CD8-positive, alpha-beta memory T cell (primary cell): ENCODE measurements at regions of chr4 and their contacts with region 1.

Region 1: GRCh38 chr4:101347557-101348366 is 436 bp upstream of the PPP3CA start:
- DNase-seq: peak; percentile 97 to 99 (median 99)
- H3K4me3 ChIP-seq: peak overlapping the region; percentile 98
- H3K4me3 Mint-ChIP-seq: peak overlapping the region; percentile 91 to 99 (median 96)
- H3K27ac ChIP-seq: peak overlapping the region; percentile 80
- H3K27ac Mint-ChIP-seq: peak overlapping the region; percentile 93 to 98 (median 95)
- H3K4me1 ChIP-seq: peaks cover 26% of the 10 kb centered on the region
- H3K4me1 Mint-ChIP-seq: peaks cover 38 to 45% (median 43%) of the 10 kb centered on the region in 3 donors
- H3K27me3 ChIP-seq: no peaks in the 10 kb centered on the region
- H3K27me3 Mint-ChIP-seq: peaks cover 0 to 3% of the 10 kb centered on the region in 2 donors

Region 2: DNA sequence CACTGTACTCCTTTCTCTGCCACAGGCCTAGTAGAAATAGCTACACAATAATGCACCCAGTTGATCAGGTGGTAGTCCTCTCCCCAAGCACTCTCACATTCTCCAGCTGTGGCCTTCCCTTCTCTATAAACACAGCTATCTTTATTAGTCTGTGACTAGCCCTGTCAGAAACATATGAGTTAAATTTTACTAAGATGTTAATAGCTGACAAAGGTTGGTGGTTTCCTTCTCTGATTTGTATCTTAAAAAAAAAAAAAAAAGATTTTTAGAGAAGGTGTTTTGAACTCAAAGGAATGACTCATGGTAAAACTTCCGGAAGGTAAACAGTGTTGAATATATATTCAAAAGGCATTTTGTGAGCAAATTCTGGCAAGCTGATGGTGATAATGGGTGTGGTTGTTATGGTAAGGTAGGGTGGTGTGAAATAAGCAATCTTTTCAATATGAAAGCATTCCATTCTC is 327.8 kb before region 1 on chr4:
- CTCF ChIA-PET with region 1: interaction called, 8 read pairs
- POLR2A ChIA-PET with region 1: interaction called, 18 read pairs
- DNase-seq: peak in 3 of 5 donors; percentile 19 to 78 (median 71)
- H3K4me3 ChIP-seq: no peak overlapping the region
- H3K4me3 Mint-ChIP-seq: peak overlapping the region; percentile 17 to 78 (median 62)
- H3K27ac ChIP-seq: peak overlapping the region; percentile 52
- H3K27ac Mint-ChIP-seq: peak overlapping the region; percentile 64 to 95 (median 82)
- H3K4me1 ChIP-seq: peaks cover 42% of the 10 kb centered on the region
- H3K4me1 Mint-ChIP-seq: peaks cover 60 to 78% (median 71%) of the 10 kb centered on the region in 3 donors
- H3K27me3 ChIP-seq: no peaks in the 10 kb centered on the region
- H3K27me3 Mint-ChIP-seq: no peaks in the 10 kb centered on the region

Region 3: DNA sequence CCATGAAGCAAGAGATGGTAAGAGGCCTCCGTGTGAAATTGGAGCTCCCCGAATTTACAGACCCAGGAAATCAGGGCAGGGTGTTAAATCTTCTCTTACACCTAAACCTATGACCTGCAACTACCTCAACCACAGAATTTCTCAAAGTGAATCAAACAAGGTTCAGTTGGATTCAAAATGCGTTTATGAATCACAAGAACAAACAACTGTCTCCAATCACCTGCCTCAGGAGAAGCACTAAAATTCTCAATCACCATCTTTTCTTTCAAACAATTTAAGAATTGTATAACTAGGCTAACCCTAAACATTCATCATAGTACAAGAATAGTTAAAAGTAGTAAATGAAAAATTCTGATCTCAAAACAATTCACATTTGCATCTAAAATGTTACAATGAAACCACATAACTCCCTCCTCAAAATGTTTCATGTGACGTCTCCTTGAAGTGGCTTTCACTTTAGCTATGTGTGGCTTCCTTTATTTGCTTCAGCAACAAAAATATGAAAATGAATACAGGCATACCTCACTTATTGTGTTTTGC is 19.6 kb before region 1 on chr4:
- CTCF ChIA-PET with region 1: interaction called, 22 read pairs
- POLR2A ChIA-PET with region 1: interaction called, 21 read pairs
- DNase-seq: peak in 3 of 5 donors; percentile 55 to 74 (median 70)
- H3K4me3 ChIP-seq: peak overlapping the region; percentile 0
- H3K4me3 Mint-ChIP-seq: peak overlapping the region; percentile 41 to 83 (median 80)
- H3K27ac ChIP-seq: peak overlapping the region; percentile 0
- H3K27ac Mint-ChIP-seq: peak overlapping the region; percentile 81 to 96 (median 92)
- H3K4me1 ChIP-seq: peaks cover 34% of the 10 kb centered on the region
- H3K4me1 Mint-ChIP-seq: peaks cover 83 to 98% (median 93%) of the 10 kb centered on the region in 3 donors
- H3K27me3 ChIP-seq: no peaks in the 10 kb centered on the region
- H3K27me3 Mint-ChIP-seq: no peaks in the 10 kb centered on the region

Region 4: GRCh38 chr4:101419324-101420135 is 71.8 kb after region 1 on chr4:
- CTCF ChIA-PET with region 1: interaction called, 14 read pairs
- POLR2A ChIA-PET with region 1: interaction called, 6 read pairs
- DNase-seq: peak in 1 of 5 donors; percentile 43
- H3K4me3 ChIP-seq: no peak overlapping the region
- H3K4me3 Mint-ChIP-seq: peak overlapping the region in 3 of 7 donors; percentile 6 to 10 (median 10)
- H3K27ac ChIP-seq: no peak overlapping the region
- H3K27ac Mint-ChIP-seq: peak overlapping the region in 1 of 8 donors; percentile 32
- H3K4me1 ChIP-seq: peaks cover 35% of the 10 kb centered on the region
- H3K4me1 Mint-ChIP-seq: peaks cover 46 to 53% (median 52%) of the 10 kb centered on the region in 3 donors
- H3K27me3 ChIP-seq: no peaks in the 10 kb centered on the region
- H3K27me3 Mint-ChIP-seq: peaks cover 9 to 29% of the 10 kb centered on the region in 2 donors